A673 (cell line): ENCODE measurements at regions of chr1 and their contacts with region 1.

Region 1: DNA sequence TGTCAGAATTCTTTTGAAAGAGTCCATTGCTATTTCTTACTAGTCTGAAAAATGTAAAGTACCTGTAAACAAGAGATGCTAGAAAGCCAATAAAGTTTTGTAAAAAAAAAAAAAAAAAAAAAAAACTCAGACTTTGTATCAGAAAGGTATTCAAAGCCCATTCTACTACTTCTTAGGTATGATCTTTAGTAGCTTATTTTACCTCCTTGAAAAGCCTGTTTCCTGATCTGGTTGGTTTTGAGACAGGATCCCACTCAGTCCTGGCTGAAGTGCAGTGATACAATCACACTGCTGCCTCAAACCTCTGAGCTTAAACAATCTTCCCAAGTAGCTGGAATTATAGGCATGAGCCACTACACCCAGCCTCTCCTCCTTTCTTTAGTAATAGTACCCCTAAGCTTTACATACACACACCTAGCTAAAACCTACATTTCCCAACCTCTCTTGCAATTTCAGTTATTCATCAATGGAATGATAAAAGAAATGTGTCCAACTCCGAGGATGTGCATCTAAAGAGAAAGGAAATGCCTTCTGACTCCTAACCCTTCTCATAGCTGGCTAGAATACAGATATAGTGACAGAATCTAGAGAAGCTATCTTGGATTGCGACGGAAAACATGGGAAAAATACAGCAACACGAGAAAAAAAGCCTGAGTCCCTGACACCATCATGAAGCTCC is 30.6 kb downstream of the EPS15 start:
- DNase-seq: no peak
- H3K4me3 ChIP-seq: no peak overlapping the region
- H3K27ac ChIP-seq: no peak overlapping the region
- H3K4me1 ChIP-seq: peaks cover 23% of the 10 kb centered on the region
- H3K27me3 ChIP-seq: no peaks in the 10 kb centered on the region
- CTCF ChIP-seq: no peak

Region 2: GRCh38 chr1:51627678-51628077 is 139.2 kb after region 1 on chr1:
- CTCF ChIA-PET with region 1: no interaction called
- POLR2A ChIA-PET with region 1: no interaction called
- intact Hi-C with region 1: no loop called
- DNase-seq: peak; percentile 79
- H3K4me3 ChIP-seq: no peak overlapping the region
- H3K27ac ChIP-seq: no peak overlapping the region
- H3K4me1 ChIP-seq: peaks cover 12% of the 10 kb centered on the region
- H3K27me3 ChIP-seq: no peaks in the 10 kb centered on the region
- CTCF ChIP-seq: peak; percentile 72

Region 3: DNA sequence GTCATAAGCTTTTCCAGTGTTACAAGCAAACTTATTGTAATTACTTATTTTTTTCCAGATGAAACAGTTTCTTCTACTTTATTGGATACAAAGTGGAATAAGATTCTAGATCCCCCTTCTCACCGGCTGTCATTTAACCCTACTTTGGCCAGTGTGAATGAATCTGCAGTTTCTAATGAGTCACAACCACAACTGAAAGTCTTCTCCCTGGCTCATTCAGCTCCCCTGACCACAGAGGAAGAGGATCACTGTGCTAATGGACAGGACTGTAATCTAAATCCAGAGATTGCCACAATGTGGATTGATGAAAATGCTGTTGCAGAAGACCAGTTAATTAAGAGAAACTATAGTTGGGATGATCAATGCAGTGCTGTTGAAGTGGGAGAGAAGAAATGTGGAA is 748.9 kb after region 1 on chr1:
- CTCF ChIA-PET with region 1: no interaction called
- POLR2A ChIA-PET with region 1: interaction called, 26 read pairs
- intact Hi-C with region 1: no loop called
- DNase-seq: no peak
- H3K4me3 ChIP-seq: no peak overlapping the region
- H3K27ac ChIP-seq: no peak overlapping the region
- H3K4me1 ChIP-seq: peaks cover 9% of the 10 kb centered on the region
- H3K27me3 ChIP-seq: no peaks in the 10 kb centered on the region
- CTCF ChIP-seq: no peak